MCF 10A (cell line): ENCODE measurements at regions of chr5 and their contacts with region 1.

Region 1: GRCh38 chr5:17277907-17278306 is 60.5 kb downstream of the BASP1 start:
- DNase-seq: no peak
- H3K4me3 Mint-ChIP-seq: no peak overlapping the region
- H3K27ac Mint-ChIP-seq: no peak overlapping the region
- H3K4me1 Mint-ChIP-seq: no peaks in the 10 kb centered on the region
- H3K27me3 Mint-ChIP-seq: no peaks in the 10 kb centered on the region
- CTCF ChIP-seq: no peak

Region 2: DNA sequence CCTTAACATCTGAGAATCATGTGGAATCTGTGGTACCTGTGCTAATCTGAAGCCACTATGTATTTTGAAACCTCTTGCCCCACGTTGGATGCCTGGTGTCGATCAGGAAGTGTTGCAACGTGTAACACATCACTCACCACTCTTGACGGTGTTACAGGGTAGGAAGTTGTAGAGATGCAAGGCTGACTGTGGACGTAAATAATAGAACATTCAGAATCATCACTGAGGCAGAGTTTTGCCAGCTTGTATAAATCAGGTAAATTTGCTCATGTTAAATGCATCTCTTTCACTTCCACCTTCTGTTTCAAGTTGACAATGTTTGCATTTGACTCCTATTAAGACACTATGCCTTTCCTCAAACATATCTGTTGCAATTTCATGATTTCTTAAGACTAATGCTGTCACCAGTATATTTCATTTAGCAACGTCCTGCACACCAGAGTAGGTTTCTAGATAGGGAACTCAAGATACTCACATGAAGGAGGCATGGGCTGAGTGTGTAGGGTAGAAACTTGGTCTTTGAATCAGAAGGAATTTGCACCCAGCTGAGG is 22.4 kb before region 1 on chr5:
- CTCF ChIA-PET with region 1: no interaction called
- POLR2A ChIA-PET with region 1: interaction called, 10 read pairs
- intact Hi-C with region 1: no loop called
- DNase-seq: peak; percentile 91
- H3K4me3 Mint-ChIP-seq: peak overlapping the region; percentile 41
- H3K27ac Mint-ChIP-seq: peak overlapping the region; percentile 79
- H3K4me1 Mint-ChIP-seq: peaks cover 50% of the 10 kb centered on the region
- H3K27me3 Mint-ChIP-seq: no peaks in the 10 kb centered on the region
- CTCF ChIP-seq: no peak